ENCODE measurements at regions of chr10 and their contacts with region 1.

Region 1: GRCh38 chr10:100562008-100562711 is 26.4 kb downstream of the HIF1AN start:
- DNase-seq: peak; percentile 75
- H3K4me3 ChIP-seq: peak overlapping the region in 1 of 4 donors; percentile 11
- H3K27ac ChIP-seq: no peak overlapping the region
- H3K4me1 ChIP-seq: peaks cover 0 to 14% (median 8%) of the 10 kb centered on the region in 4 donors
- H3K27me3 ChIP-seq: peaks cover 55% of the 10 kb centered on the region
- CTCF ChIP-seq: peak; percentile 72 to 98 (median 92)
- EP300 ChIP-seq: no peak
- POLR2A ChIP-seq: no peak

Region 2: DNA sequence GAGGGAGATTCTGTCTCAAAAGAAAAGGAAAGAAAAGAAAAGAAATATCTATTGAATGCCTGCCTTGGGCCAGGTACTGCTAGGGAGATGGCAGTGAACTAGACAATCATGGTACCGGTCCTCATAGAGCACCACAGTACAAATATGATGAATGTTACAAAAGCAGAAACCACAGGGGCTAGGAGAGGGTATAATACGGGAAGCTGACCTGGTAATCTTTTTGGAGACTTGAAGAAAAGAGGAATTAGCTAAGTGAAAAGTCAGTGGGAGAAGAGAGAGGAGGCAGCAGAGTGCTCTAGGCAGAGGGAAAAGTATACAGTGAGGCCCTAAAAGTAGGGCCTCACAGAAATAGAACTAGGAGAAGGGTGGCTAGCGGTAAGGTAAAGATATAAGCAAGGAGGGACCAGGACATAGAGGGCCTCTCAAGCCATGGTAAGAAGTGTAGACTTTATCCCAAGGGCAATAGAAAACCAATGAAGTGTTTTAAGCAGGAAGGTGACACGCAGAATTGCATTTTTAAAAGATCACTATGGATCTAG is 142.2 kb before region 1 on chr10:
- in situ Hi-C with region 1: no loop called
- intact Hi-C with region 1: no loop called
- DNase-seq: no peak
- H3K4me3 ChIP-seq: no peak overlapping the region
- H3K27ac ChIP-seq: no peak overlapping the region
- H3K4me1 ChIP-seq: peaks cover 0 to 6% (median 3%) of the 10 kb centered on the region in 4 donors
- H3K27me3 ChIP-seq: peaks cover 8% of the 10 kb centered on the region
- CTCF ChIP-seq: no peak
- EP300 ChIP-seq: no peak
- POLR2A ChIP-seq: no peak

Region 3: GRCh38 chr10:100743626-100744135 is 181.5 kb after region 1 on chr10:
- in situ Hi-C with region 1: no loop called
- intact Hi-C with region 1: loop called (anchors 10 kb)
- DNase-seq: peak; percentile 54
- H3K4me3 ChIP-seq: no peak overlapping the region
- H3K27ac ChIP-seq: no peak overlapping the region
- H3K4me1 ChIP-seq: peaks cover 11 to 63% (median 35%) of the 10 kb centered on the region in 4 donors
- H3K27me3 ChIP-seq: peaks cover 100% of the 10 kb centered on the region
- CTCF ChIP-seq: peak; percentile 49 to 65 (median 60)
- EP300 ChIP-seq: no peak
- POLR2A ChIP-seq: no peak

Region 4: DNA sequence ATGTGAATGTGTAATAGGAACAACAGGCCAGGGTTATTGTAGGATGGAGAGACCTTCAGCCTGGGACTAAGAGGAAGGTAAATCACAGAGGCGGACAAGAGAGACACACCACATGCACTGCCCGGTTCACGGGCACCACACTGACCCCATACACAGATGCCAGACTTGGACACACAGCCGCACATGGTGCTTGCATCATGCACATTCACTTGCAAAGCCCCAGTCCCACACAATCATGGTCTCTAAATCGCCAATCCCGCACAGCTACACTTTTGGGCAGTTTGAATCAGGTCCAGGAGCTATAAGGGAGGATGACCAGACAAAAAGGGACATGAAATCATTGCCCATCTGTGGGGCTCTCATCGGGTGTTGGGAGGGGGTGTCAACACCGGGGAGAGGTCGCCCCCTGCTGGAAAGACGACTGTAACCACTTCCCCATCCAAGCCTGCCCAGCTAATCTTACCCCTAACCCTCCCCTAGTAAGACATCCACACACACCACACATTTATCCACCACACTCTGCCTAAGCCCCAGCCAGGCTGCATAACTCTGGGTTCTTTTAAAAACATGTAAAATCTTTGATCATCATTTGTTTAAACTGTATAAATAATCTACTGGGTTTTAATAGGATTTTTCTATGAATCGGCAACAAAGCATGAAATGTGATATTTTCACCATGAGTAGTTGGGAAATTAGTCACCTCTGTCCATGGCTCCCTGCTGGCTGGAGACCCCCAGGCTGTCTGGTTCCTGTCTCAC is 310.1 kb after region 1 on chr10:
- in situ Hi-C with region 1: loop called in 3 of 4 experiments (anchors 10 to 25 kb)
- intact Hi-C with region 1: no loop called
- DNase-seq: peak; percentile 17
- H3K4me3 ChIP-seq: no peak overlapping the region
- H3K27ac ChIP-seq: no peak overlapping the region
- H3K4me1 ChIP-seq: peaks cover 0 to 12% (median 6%) of the 10 kb centered on the region in 4 donors
- H3K27me3 ChIP-seq: peaks cover 28% of the 10 kb centered on the region
- CTCF ChIP-seq: peak; percentile 23 to 37 (median 30)
- EP300 ChIP-seq: no peak
- POLR2A ChIP-seq: no peak

Region 5: DNA sequence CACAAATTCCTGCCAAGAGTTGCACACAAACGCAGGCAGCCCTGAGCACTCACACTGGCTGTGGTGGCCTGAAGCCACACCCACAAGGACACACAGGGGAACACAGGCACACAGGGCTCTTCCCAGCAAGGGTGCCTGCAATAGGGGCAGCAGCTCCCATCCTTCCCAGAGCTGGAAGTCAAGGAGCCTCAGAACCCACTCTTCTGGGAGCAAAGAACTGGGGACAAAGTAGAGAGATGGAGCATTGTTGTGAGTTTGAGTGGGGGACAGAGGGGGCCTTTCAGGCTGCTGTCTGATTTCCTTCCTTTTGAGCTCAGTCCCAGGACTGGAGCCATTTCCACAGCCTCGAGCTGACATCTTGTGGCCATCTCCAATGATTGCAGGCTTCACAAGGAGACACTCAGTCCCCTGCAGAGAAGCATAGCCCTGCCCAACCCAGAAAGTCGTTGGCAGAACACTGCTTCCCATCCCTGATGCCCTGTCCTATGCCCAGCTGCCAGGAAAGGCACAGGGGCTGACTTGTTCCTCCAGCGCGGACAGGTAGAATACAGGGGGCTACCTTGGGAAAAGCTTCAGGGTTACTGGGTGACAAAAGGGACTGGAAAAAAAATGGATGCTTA is 316.2 kb after region 1 on chr10:
- in situ Hi-C with region 1: loop called in 3 of 4 experiments (anchors 10 to 25 kb)
- intact Hi-C with region 1: no loop called
- DNase-seq: peak; percentile 65
- H3K4me3 ChIP-seq: no peak overlapping the region
- H3K27ac ChIP-seq: no peak overlapping the region
- H3K4me1 ChIP-seq: peaks cover 0 to 17% (median 6%) of the 10 kb centered on the region in 4 donors
- H3K27me3 ChIP-seq: peaks cover 14% of the 10 kb centered on the region
- CTCF ChIP-seq: peak; percentile 52 to 74 (median 62)
- EP300 ChIP-seq: no peak
- POLR2A ChIP-seq: no peak